CD8-positive, alpha-beta T cell (primary cell): ENCODE measurements at regions of chr7 and their contacts with region 1.

Region 1: DNA sequence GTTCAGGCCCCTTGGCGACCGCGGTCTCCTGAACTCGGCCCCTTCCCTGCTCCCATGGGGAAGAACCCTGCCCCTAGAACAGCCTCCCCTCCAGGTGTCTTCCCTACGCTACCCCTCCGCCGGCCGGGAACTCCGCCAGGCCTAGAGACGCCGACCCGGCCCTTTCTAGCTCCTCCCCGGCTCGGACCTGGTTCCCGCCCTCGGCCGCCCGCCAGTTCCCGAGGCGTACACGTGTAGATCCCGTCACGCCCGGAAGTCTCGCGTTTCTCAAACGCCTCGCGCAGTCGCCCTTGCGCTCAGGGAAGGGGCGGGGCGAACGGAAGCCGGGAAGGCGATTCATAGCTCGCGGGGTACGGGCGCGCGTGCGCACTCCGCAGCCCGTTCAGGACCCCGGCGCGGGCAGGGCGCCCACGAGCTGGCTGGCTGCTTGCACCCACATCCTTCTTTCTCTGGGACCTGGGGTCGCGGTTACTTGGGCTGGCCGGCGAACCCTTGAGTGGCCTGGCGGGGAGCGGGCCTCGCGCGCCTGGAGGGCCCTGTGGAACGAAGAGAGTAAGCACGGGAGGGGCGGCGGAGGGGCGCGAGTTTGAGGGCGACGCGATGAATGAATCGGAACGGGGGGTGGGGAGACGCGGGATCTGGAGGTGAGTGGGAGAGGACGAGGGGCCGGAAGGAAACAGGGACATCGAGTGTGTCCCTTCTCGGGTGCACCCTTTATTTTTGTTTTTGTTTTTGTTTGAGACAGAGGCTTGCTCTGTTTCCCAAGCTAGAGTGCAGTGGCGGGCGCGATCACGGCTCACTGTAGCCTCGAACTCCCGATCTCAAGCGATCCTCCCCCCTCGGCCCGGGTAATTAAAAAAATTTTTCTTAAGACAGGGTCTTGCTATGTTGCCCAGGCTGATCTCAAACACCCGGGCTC is at the start of gene POP7:
- DNase-seq: peak; percentile 93 to 99 (median 98)
- ATAC-seq: peak; percentile 95
- H3K4me3 ChIP-seq: peak within 1 kb of the TSS; percentile 80 to 94
- H3K4me3 Mint-ChIP-seq: peak within 1 kb of the TSS; percentile 96
- H3K27ac ChIP-seq: peak within 1 kb of the TSS; percentile 53 to 82
- H3K27ac Mint-ChIP-seq: peak within 1 kb of the TSS; percentile 94
- H3K4me1 ChIP-seq: peaks cover 16% of the 10 kb centered on the region
- H3K4me1 Mint-ChIP-seq: peaks cover 19% of the 10 kb centered on the region
- H3K27me3 ChIP-seq: no peaks in the 10 kb centered on the region
- H3K27me3 Mint-ChIP-seq: peaks cover 2% of the 10 kb centered on the region
- CTCF ChIP-seq: no peak
- total RNA-seq, gene POP7: 9.3 to 11.0 TPM

Region 2: DNA sequence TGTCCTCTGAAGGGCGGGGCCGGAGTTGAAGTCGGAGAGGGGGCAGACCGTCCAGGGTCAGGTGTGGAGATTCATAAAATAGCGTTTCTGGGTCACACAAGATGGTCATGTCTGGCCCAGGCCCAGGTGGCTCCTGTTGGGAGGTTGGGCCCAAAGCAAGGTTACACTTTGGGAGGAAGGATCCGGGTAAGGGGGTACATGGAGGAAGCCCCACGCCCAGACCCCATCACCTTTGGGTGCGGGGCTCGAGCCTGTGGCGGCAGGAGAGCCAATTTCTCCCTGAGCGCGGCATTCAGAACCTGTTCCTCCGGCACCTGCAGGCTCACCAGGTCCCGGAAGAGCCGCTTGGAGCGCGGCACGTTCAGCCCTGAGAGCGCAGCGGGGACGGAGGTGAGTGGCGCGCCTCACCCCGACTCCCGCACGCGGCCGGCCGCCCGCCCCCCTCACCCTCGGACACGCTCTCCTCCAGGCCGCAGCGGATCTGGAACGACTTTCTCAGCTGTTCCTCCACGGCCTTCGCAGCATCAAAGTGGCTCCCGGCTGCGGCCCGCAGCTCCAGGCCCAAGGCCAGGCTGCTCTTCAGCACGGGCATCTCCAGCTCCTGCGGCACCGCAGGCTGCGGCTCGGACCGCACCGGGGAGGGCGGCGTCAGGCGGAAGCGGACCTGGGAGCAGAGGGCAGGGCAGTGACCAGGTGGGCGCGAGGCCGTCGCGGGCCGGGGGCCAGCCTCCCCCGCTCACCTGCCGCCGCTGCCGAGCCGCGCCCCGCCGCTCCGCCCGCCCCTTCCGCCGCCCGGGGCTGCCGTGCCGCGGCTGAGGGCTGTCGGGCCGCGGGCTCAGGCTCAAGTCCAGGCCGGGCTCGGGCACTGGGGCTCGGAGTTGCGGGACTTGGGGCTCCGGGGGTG is 270.4 kb before region 1 on chr7:
- CTCF ChIA-PET with region 1: no interaction called
- POLR2A ChIA-PET with region 1: interaction called, 17 read pairs
- intact Hi-C with region 1: loop called in 1 of 2 experiments (anchors 5 kb)
- DNase-seq: peak in 8 of 9 experiments; percentile 35 to 76 (median 52)
- ATAC-seq: peak; percentile 32
- H3K4me3 ChIP-seq: peak overlapping the region; percentile 75 to 90
- H3K4me3 Mint-ChIP-seq: peak overlapping the region; percentile 94
- H3K27ac ChIP-seq: peak overlapping the region; percentile 90 to 96
- H3K27ac Mint-ChIP-seq: peak overlapping the region; percentile 97
- H3K4me1 ChIP-seq: peaks cover 38% of the 10 kb centered on the region
- H3K4me1 Mint-ChIP-seq: peaks cover 51% of the 10 kb centered on the region
- H3K27me3 ChIP-seq: no peaks in the 10 kb centered on the region
- H3K27me3 Mint-ChIP-seq: no peaks in the 10 kb centered on the region
- CTCF ChIP-seq: no peak

Region 3: DNA sequence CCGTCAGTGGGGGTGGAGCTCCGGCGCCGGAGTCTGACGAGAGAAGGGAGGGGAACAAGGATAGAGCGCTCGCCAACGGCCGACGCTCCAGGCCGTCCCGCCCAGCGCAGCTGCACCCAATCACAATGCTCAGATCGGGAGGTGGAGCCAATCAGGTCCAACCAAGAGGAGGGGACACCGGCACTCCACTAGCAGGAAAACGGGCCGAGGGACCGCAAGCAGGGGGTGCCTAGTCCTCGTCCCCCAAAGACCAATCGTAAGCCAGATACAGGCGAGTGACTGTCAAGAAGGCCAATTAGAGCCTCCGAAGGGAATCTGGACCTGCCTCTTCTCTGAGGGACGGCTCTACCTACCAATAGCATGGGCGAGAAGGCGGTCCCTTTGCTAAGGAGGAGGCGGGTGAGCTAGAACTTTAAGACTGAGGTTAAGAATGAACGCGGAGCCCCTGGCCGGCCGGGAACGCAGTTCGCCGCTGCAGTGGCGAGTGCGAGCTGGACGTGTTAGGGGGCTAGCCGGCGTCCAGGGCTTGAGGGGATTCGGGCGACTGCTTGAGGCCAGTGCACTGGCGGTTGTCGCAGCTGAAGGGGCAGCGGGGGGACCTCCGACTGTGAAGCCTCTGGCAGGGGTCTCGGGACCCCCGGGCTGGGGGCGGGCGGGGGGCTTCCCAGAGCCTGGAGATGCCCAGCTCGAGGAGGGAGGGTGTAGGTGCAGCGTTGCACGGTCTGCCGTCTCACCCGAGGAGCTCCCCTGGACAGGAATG is 119.6 kb before region 1 on chr7 and contains the start of gene FBXO24:
- CTCF ChIA-PET with region 1: interaction called, 9 read pairs
- POLR2A ChIA-PET with region 1: interaction called, 13 read pairs
- intact Hi-C with region 1: loop called in 1 of 2 experiments (anchors 1 kb)
- DNase-seq: peak; percentile 98 to 100 (median 99)
- ATAC-seq: peak; percentile 80
- H3K4me3 ChIP-seq: peak within 1 kb of the TSS; percentile 93 to 96
- H3K4me3 Mint-ChIP-seq: peak within 1 kb of the TSS; percentile 96
- H3K27ac ChIP-seq: peak within 1 kb of the TSS; percentile 74 to 94
- H3K27ac Mint-ChIP-seq: peak within 1 kb of the TSS; percentile 57
- H3K4me1 ChIP-seq: peaks cover 22% of the 10 kb centered on the region
- H3K4me1 Mint-ChIP-seq: peaks cover 39% of the 10 kb centered on the region
- H3K27me3 ChIP-seq: no peaks in the 10 kb centered on the region
- H3K27me3 Mint-ChIP-seq: peaks cover 3% of the 10 kb centered on the region
- CTCF ChIP-seq: no peak
- total RNA-seq, gene FBXO24: 0.30 to 0.53 TPM

Region 4: GRCh38 chr7:100626530-100627237 is 79.3 kb before region 1 on chr7:
- CTCF ChIA-PET with region 1: interaction called, 13 read pairs
- POLR2A ChIA-PET with region 1: interaction called, 8 read pairs
- intact Hi-C with region 1: no loop called
- DNase-seq: peak; percentile 82 to 94 (median 88)
- ATAC-seq: peak; percentile 99
- H3K4me3 ChIP-seq: peak overlapping the region; percentile 40 to 45
- H3K4me3 Mint-ChIP-seq: peak overlapping the region; percentile 70
- H3K27ac ChIP-seq: peak overlapping the region; percentile 56 to 78
- H3K27ac Mint-ChIP-seq: peak overlapping the region; percentile 80
- H3K4me1 ChIP-seq: peaks cover 14% of the 10 kb centered on the region
- H3K4me1 Mint-ChIP-seq: peaks cover 35% of the 10 kb centered on the region
- H3K27me3 ChIP-seq: no peaks in the 10 kb centered on the region
- H3K27me3 Mint-ChIP-seq: no peaks in the 10 kb centered on the region
- CTCF ChIP-seq: no peak

Region 5: DNA sequence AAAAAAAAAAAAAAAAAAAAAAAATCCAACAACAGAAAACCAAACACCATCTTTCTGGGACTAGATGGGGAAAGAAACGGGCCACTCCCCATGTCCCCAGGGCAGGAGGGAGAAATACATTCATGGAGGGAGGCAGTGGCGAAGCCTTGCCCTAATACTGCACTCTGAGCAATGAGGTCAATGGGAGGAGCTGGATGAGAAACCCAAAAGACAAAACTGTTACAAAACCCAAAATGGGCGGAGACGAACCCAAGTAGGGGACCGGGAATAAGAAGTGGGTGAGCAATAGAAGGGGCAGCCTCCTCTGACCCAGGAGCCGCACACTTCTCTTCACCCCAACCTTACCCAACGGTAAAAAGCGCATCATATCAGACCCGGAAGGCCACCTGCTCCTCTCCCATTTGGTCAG is 25.8 kb before region 1 on chr7:
- CTCF ChIA-PET with region 1: interaction called, 17 read pairs
- POLR2A ChIA-PET with region 1: interaction called, 5 read pairs
- intact Hi-C with region 1: no loop called
- DNase-seq: peak in 2 of 9 experiments; percentile 42 to 48
- ATAC-seq: no peak
- H3K4me3 ChIP-seq: no peak overlapping the region
- H3K4me3 Mint-ChIP-seq: no peak overlapping the region
- H3K27ac ChIP-seq: peak overlapping the region in 1 of 2 experiments; percentile 1
- H3K27ac Mint-ChIP-seq: peak overlapping the region; percentile 68
- H3K4me1 ChIP-seq: peaks cover 35% of the 10 kb centered on the region
- H3K4me1 Mint-ChIP-seq: peaks cover 37% of the 10 kb centered on the region
- H3K27me3 ChIP-seq: no peaks in the 10 kb centered on the region
- H3K27me3 Mint-ChIP-seq: no peaks in the 10 kb centered on the region
- CTCF ChIP-seq: no peak

Region 6: GRCh38 chr7:100726996-100727761 is 21.2 kb after region 1 on chr7:
- CTCF ChIA-PET with region 1: interaction called, 39 read pairs
- POLR2A ChIA-PET with region 1: no interaction called
- intact Hi-C with region 1: loop called (anchors 1 kb)
- DNase-seq: no peak
- ATAC-seq: no peak
- H3K4me3 ChIP-seq: no peak overlapping the region
- H3K4me3 Mint-ChIP-seq: no peak overlapping the region
- H3K27ac ChIP-seq: no peak overlapping the region
- H3K27ac Mint-ChIP-seq: no peak overlapping the region
- H3K4me1 ChIP-seq: no peaks in the 10 kb centered on the region
- H3K4me1 Mint-ChIP-seq: peaks cover 3% of the 10 kb centered on the region
- H3K27me3 ChIP-seq: peaks cover 0 to 4% of the 10 kb centered on the region in 2 experiments
- H3K27me3 Mint-ChIP-seq: peaks cover 28% of the 10 kb centered on the region
- CTCF ChIP-seq: no peak

Region 7: DNA sequence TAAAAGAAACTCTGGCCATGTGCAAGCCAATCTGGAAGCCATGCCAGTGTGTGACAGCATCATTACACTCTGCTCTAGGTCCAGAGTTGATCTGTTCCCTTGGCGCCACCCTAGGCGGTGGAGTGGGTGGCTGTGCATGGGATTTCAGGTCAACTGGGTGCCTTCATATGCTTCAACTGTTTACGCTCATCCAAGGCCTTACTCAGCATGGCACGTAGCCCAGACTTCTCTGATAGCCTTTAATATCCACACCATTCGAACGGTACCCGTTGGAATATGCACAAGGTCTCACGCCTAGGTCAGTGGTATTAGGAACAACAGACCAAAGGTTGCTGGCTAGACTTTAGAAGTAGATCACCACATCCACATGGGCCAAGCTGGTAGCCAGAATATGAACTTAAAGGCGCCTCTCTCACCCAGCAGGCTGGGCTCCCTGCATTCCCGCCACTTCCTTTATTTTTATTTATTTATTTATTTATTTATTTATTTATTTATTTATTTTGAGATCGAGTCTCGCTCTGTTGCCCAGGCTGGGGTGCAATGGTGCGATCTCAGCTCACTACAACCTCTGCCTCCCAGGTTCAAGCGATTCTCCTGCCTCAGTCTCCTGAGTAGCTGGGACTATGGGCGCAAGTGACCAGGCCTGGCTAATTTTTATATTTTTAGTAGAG is 208.3 kb after region 1 on chr7:
- CTCF ChIA-PET with region 1: no interaction called
- POLR2A ChIA-PET with region 1: no interaction called
- intact Hi-C with region 1: no loop called
- DNase-seq: no peak
- ATAC-seq: no peak
- H3K4me3 ChIP-seq: no peak overlapping the region
- H3K4me3 Mint-ChIP-seq: no peak overlapping the region
- H3K27ac ChIP-seq: no peak overlapping the region
- H3K27ac Mint-ChIP-seq: no peak overlapping the region
- H3K4me1 ChIP-seq: no peaks in the 10 kb centered on the region
- H3K4me1 Mint-ChIP-seq: peaks cover 2% of the 10 kb centered on the region
- H3K27me3 ChIP-seq: no peaks in the 10 kb centered on the region
- H3K27me3 Mint-ChIP-seq: peaks cover 27% of the 10 kb centered on the region
- CTCF ChIP-seq: no peak

Region 8: DNA sequence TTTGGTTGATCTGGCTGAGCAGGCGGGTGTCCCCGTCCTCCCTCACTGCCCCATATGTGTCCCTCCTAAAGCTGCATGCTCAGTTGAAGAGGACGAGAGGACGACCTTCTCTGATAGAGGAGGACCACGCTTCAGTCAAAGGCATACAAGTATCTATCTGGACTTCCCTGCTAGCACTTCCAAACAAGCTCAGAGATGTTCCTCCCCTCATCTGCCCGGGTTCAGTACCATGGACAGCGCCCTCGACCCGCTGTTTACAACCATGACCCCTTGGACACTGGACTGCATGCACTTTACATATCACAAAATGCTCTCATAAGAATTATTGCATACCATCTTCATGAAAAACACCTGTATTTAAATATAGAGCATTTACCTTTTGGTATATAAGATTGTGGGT is 352.3 kb after region 1 on chr7:
- CTCF ChIA-PET with region 1: interaction called, 3 read pairs
- POLR2A ChIA-PET with region 1: no interaction called
- intact Hi-C with region 1: loop called in 1 of 2 experiments (anchors 1 kb)
- DNase-seq: peak in 8 of 9 experiments; percentile 24 to 66 (median 58)
- ATAC-seq: no peak
- H3K4me3 ChIP-seq: no peak overlapping the region
- H3K4me3 Mint-ChIP-seq: no peak overlapping the region
- H3K27ac ChIP-seq: no peak overlapping the region
- H3K27ac Mint-ChIP-seq: no peak overlapping the region
- H3K4me1 ChIP-seq: no peaks in the 10 kb centered on the region
- H3K4me1 Mint-ChIP-seq: no peaks in the 10 kb centered on the region
- H3K27me3 ChIP-seq: peaks cover 0 to 19% of the 10 kb centered on the region in 2 experiments
- H3K27me3 Mint-ChIP-seq: peaks cover 41% of the 10 kb centered on the region
- CTCF ChIP-seq: no peak